Right lobe of liver (tissue), 6 donors: ENCODE measurements at regions of chr14 and their contacts with region 1.

Region 1: GRCh38 chr14:104137297-104138097 is 890 bp upstream of the KIF26A start:
- DNase-seq: peak; percentile 74 to 82 (median 81)
- ATAC-seq: peak; percentile 85 to 92 (median 87)
- H3K4me3 ChIP-seq: peak overlapping the region; percentile 26 to 48 (median 38)
- H3K27ac ChIP-seq: peak overlapping the region in 1 of 3 donors; percentile 43
- H3K4me1 ChIP-seq: peaks cover 0 to 19% (median 0%) of the 10 kb centered on the region in 4 donors
- H3K27me3 ChIP-seq: peaks cover 0 to 31% of the 10 kb centered on the region in 2 donors
- CTCF ChIP-seq: peak; percentile 94 to 98 (median 96)
- POLR2A ChIP-seq: no peak

Region 2: GRCh38 chr14:103910262-103910935 is 227.1 kb before region 1 on chr14:
- intact Hi-C with region 1: no loop called
- DNase-seq: peak; percentile 89 to 94 (median 90)
- ATAC-seq: peak; percentile 99 to 100 (median 100)
- H3K4me3 ChIP-seq: no peak overlapping the region
- H3K27ac ChIP-seq: no peak overlapping the region
- H3K4me1 ChIP-seq: peaks cover 0 to 11% (median 3%) of the 10 kb centered on the region in 4 donors
- H3K27me3 ChIP-seq: no peaks in the 10 kb centered on the region
- CTCF ChIP-seq: peak; percentile 81 to 89 (median 89)
- POLR2A ChIP-seq: no peak

Region 3: DNA sequence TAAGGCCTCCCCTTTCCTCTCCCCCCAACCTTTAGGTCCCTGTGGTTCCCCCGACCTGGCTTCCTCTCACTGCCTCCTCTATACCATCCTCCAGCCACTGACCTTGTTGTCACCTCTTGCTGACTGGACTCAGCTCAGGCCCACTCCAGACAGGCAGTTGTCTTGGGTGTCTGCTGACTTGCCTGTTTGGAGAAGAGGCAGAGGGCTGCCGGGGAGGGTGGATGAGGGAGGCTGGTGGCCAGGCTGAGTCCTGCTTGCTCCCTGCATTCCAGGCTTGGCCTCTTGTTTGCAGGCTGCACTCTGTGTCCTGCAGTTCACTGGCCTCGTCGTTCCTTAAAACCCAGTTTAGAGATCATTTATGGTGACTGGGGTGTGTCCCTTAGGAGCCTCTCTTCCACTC is 164.1 kb before region 1 on chr14:
- intact Hi-C with region 1: no loop called
- DNase-seq: peak in 1 of 3 donors; percentile 47
- ATAC-seq: peak in 3 of 4 donors; percentile 29 to 54 (median 52)
- H3K4me3 ChIP-seq: no peak overlapping the region
- H3K27ac ChIP-seq: no peak overlapping the region
- H3K4me1 ChIP-seq: no peaks in the 10 kb centered on the region
- H3K27me3 ChIP-seq: no peaks in the 10 kb centered on the region
- CTCF ChIP-seq: no peak
- POLR2A ChIP-seq: no peak

Region 4: GRCh38 chr14:104554608-104555429 is 417.3 kb after region 1 on chr14:
- intact Hi-C with region 1: loop called in 1 of 2 experiments (anchors 5 kb)
- DNase-seq: peak; percentile 13 to 48 (median 44)
- ATAC-seq: no peak
- H3K4me3 ChIP-seq: no peak overlapping the region
- H3K27ac ChIP-seq: no peak overlapping the region
- H3K4me1 ChIP-seq: no peaks in the 10 kb centered on the region
- H3K27me3 ChIP-seq: no peaks in the 10 kb centered on the region
- CTCF ChIP-seq: no peak
- POLR2A ChIP-seq: no peak

Region 5: GRCh38 chr14:104563742-104564615 is 426.5 kb after region 1 on chr14:
- intact Hi-C with region 1: loop called (anchors 2 to 5 kb)
- DNase-seq: peak; percentile 80 to 83 (median 81)
- ATAC-seq: peak; percentile 85 to 94 (median 88)
- H3K4me3 ChIP-seq: no peak overlapping the region
- H3K27ac ChIP-seq: no peak overlapping the region
- H3K4me1 ChIP-seq: no peaks in the 10 kb centered on the region
- H3K27me3 ChIP-seq: no peaks in the 10 kb centered on the region
- CTCF ChIP-seq: peak; percentile 71 to 83 (median 80)
- POLR2A ChIP-seq: no peak

Region 6: DNA sequence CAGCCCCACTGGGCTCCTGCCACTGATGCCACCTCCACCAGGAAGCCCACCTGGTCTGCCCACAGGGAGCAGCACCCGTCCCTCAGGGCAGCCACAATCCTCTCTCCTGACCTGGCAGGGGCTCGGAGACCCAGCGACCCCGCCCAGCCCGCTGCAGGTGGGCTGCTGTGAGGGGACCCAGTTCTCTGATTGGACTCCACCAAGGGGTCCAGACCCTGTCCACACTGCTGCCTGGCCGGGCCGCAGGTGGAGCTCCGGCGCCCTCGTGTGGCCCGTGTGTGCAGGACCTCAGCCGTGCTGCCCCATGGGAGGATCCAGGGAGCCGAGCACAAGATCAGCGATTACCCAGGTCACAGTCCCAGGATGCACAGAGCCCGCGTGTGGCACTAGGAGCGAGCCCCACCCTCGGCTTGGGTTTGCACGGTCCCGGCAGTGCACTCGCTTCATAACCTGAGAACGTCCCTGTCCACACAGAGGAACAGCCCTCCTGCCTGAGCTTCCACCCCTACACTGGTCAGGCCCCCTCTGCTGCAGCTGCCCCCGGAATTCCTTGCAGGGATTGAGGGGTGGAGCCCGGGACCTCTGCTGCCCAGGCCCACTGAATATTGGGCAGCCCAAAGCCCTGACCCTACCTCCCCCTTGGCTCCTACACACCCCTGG is 502.5 kb after region 1 on chr14:
- intact Hi-C with region 1: loop called (anchors 5 to 10 kb)
- DNase-seq: peak; percentile 71 to 78 (median 74)
- ATAC-seq: peak; percentile 86 to 92 (median 88)
- H3K4me3 ChIP-seq: no peak overlapping the region
- H3K27ac ChIP-seq: no peak overlapping the region
- H3K4me1 ChIP-seq: peaks cover 0 to 9% (median 3%) of the 10 kb centered on the region in 4 donors
- H3K27me3 ChIP-seq: no peaks in the 10 kb centered on the region
- CTCF ChIP-seq: peak; percentile 84 to 99 (median 95)
- POLR2A ChIP-seq: no peak